Activated T-helper 1 cell treated with anti-CD3 and anti-CD28 coated beads, Interleukin-12 subunit alpha, Interleukin-12 subunit beta, Interleukin-2, Interleukin-4 antibody, amounts not matched to agents 30 ng/mL and 10 ng/mL and 1 ng/mL, durations not matched to agents 14 hours and 24 hours and 36 hours (primary cell): ENCODE measurements at regions of chr10 and their contacts with region 1.

Region 1: DNA sequence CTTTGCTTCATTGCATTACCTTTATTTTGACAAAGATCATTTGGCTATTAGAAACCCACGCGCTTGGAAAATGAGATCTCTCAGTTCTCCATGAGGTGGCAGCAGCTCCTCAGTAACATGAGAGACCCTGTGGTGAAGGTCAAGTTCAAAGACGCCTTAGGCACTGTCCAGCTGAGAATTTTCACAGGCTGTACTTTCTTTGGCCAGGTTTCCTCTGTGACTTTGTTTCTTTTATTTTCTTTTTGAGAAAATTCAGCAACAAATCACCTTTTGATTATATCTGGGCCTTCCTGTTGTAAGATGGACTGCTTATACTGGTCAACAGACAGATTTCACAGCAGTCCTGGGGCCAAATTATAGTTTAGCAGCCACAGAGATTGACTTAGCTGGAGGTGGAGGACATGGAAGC is 54.5 kb downstream of the RAB18 start:
- DNase-seq: peak; percentile 5
- H3K4me3 Mint-ChIP-seq: no peak overlapping the region
- H3K27ac Mint-ChIP-seq: no peak overlapping the region
- H3K4me1 Mint-ChIP-seq: no peaks in the 10 kb centered on the region
- H3K27me3 Mint-ChIP-seq: peaks cover 4% of the 10 kb centered on the region

Region 2: GRCh38 chr10:27446091-27446918 is 112.3 kb before region 1 on chr10:
- intact Hi-C with region 1: loop called (anchors 5 kb)
- DNase-seq: no peak
- H3K4me3 Mint-ChIP-seq: no peak overlapping the region
- H3K27ac Mint-ChIP-seq: no peak overlapping the region
- H3K4me1 Mint-ChIP-seq: no peaks in the 10 kb centered on the region
- H3K27me3 Mint-ChIP-seq: peaks cover 2% of the 10 kb centered on the region

Region 3: DNA sequence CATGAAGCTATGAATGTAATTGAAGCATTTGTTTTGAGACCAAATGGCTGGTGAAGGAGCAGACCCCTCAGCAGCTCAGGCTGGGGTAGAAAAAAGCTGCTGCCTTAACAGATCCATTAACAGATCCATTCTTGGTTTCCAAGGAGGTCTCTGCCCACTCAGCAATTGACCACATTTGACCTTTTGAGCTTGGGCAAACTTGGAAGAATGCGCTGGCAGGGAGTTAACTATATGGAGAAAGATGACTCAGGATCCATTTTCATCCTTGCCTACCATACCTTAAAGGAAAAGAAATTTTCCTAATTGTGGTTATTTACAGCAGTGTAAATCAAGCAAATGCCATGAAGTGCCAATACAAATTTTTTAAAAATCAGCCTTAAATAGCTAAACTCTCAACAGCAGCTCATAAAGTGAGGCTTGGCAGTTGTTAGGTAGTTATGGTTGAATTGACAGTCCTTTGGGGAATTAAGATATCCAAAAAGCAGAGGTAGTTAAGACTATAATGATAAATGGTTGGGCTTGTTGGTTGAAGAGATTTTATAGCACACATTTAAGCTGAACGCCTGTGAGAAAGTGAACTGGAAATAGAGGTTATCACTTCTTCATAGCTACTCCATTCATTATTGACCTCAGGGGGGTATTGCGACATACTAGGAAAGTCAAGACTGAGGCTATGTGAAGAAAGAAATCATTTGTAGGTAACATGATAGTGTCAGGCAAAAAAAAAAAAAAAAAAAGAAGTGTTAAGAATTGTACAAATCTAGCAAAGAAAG is 103.1 kb after region 1 on chr10:
- intact Hi-C with region 1: loop called (anchors 1 kb)
- DNase-seq: no peak
- H3K4me3 Mint-ChIP-seq: no peak overlapping the region
- H3K27ac Mint-ChIP-seq: no peak overlapping the region
- H3K4me1 Mint-ChIP-seq: no peaks in the 10 kb centered on the region
- H3K27me3 Mint-ChIP-seq: peaks cover 26% of the 10 kb centered on the region

Region 4: DNA sequence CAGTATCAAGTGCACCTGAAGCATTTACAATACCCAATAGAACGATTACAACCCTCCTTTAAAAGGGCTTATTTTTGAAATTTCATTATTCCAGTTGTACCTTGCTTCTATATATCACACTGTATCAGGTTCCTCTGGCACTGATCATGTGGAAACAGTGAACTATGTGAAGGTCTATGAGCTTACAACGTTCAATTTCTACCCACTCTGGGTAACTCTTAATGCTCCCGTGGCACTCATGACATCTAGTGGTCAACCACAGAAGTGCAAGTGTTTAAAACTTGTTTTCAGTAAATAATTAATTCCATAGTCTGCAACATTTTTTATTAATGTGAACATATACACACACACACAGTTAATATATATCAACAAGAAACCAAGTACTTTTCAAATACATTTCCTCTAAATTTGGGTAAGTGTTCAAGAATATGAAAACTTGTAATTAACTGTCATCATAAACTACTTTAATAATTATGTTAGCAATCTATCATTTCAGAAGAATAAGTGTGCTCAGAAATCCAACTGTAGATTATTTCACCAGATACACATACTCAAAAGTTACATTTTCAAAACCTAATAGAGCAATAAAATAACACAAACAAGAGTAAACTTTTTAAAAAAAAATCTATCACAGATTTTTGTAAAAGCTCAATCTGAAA is 683.3 kb after region 1 on chr10:
- intact Hi-C with region 1: loop called (anchors 1 kb)
- DNase-seq: peak; percentile 4
- H3K4me3 Mint-ChIP-seq: no peak overlapping the region
- H3K27ac Mint-ChIP-seq: no peak overlapping the region
- H3K4me1 Mint-ChIP-seq: no peaks in the 10 kb centered on the region
- H3K27me3 Mint-ChIP-seq: no peaks in the 10 kb centered on the region

Region 5: DNA sequence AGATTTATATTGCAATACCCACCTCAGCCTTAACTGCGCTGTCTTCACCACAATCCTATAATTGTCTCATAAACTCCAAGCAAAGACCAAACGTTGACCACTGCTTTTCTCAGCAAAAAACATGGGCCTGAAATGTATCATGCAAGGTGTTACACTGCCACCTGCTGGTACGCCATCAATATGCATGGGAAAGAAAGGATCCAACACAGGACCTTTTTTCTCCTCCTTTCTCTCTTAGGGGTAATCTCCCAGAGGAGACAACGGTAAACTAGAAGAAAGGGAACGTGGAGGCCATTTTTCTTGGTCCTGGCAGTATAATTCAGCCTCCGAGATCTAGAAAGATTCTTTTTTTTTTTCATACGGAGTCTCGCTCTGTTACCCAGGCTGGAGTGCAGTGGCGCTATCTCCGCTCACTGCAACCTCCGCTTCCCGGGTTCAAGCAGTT is 823.3 kb after region 1 on chr10:
- intact Hi-C with region 1: loop called (anchors 5 kb)
- DNase-seq: peak; percentile 58
- H3K4me3 Mint-ChIP-seq: no peak overlapping the region
- H3K27ac Mint-ChIP-seq: no peak overlapping the region
- H3K4me1 Mint-ChIP-seq: peaks cover 24% of the 10 kb centered on the region
- H3K27me3 Mint-ChIP-seq: peaks cover 22% of the 10 kb centered on the region